ENCODE measurements at regions of chr11 and their contacts with region 1.

Region 1: GRCh38 chr11:88281317-88281712 is 56.2 kb downstream of the CTSC start:
- H3K4me3 Mint-ChIP-seq: no peak overlapping the region
- H3K27ac Mint-ChIP-seq: no peak overlapping the region
- H3K4me1 Mint-ChIP-seq: peaks cover 16% of the 10 kb centered on the region
- H3K27me3 Mint-ChIP-seq: no peaks in the 10 kb centered on the region

Region 2: DNA sequence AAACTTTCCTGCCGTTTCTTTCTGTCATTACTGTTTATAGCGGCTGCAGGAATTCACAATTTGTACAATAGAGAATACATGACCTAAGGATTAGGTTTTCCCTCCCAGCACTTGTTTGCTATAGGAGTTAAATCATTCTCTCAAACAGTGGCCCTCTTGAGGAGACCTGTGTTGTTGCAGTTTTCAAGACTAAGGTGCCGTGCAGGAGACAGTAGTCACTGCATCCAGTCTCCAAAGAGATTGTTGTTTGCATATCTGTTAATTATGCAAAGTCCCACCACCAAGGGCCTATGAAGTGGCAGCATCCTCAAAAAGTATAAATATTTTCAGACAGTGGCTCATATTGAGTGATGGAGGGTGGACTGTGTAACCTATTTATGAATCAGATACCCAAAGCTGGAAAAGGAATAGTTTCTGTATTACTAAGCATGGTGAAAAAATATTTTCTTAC is 1478.7 kb before region 1 on chr11:
- intact Hi-C with region 1: loop called (anchors 10 kb)
- H3K4me3 Mint-ChIP-seq: no peak overlapping the region
- H3K27ac Mint-ChIP-seq: no peak overlapping the region
- H3K4me1 Mint-ChIP-seq: peaks cover 38% of the 10 kb centered on the region
- H3K27me3 Mint-ChIP-seq: peaks cover 48% of the 10 kb centered on the region

Region 3: GRCh38 chr11:88103337-88104206 is 177.7 kb before region 1 on chr11:
- intact Hi-C with region 1: no loop called
- H3K4me3 Mint-ChIP-seq: no peak overlapping the region
- H3K27ac Mint-ChIP-seq: no peak overlapping the region
- H3K4me1 Mint-ChIP-seq: peaks cover 10% of the 10 kb centered on the region
- H3K27me3 Mint-ChIP-seq: no peaks in the 10 kb centered on the region

Region 4: DNA sequence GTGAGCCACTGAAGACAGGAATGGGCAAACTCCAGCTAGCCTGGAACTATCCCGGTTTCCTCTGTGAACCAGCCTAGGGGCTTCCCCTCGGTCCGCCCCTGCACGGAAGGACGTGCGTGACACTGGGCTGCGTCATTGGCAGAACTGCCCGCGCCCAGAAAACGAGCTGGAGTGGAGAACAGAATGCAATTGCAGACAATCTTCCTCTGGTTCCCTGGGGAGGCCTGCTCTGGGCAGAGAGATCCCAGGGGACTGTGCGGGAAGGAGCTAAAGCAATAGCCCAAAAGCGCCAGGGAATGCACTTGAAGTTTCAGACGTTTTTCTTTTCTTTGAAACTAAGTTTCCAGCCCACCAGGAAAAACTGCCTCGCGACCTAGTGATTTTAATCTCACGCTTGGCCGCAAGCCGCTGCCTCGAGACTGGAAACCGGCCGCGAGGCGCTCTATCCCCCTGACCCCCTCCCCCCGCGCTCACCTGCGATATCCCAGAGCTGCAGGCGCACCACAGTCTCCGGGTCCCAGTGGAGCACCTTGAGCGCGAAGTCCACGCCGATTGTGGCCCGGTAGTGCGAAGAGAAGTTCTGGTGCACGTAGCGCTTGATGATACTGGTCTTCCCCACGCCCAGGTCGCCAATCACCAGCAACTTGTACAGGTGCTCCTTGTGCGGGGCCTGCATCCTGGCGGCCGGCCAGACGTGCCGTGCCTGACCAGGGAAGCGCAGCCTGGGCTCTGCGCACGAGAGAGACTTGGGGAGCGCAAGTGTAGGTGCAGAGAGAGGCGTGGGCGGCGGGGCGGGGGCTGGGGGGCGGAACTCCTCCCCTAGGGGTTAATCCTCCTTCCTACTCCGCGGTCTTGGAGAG is 106.4 kb before region 1 on chr11 and contains the start of gene RAB38:
- intact Hi-C with region 1: no loop called
- H3K4me3 Mint-ChIP-seq: peak within 1 kb of the TSS; percentile 72
- H3K27ac Mint-ChIP-seq: peak within 1 kb of the TSS; percentile 27
- H3K4me1 Mint-ChIP-seq: peaks cover 13% of the 10 kb centered on the region
- H3K27me3 Mint-ChIP-seq: peaks cover 5% of the 10 kb centered on the region

Region 5: GRCh38 chr11:88979641-88980040 is 698.3 kb after region 1 on chr11:
- intact Hi-C with region 1: no loop called
- H3K4me3 Mint-ChIP-seq: no peak overlapping the region
- H3K27ac Mint-ChIP-seq: no peak overlapping the region
- H3K4me1 Mint-ChIP-seq: no peaks in the 10 kb centered on the region
- H3K27me3 Mint-ChIP-seq: no peaks in the 10 kb centered on the region

Region 6: DNA sequence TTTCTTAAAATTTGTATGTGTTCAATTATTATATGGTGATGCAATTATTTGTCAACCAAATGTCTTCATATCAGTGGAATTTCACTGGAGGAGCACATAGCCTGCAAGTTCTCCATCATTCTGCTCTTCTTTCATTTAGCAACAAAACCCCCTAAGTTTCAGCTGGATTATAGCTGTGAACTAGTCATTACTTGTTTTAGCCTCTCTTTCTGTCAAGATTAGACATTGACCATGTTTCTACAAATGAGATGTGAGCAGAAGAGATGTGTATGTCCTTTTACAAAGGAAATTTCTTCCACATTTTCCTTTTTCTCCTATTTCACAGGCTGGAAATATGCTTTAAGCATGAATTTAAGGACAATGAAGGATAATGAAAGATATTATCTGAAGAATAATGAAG is 1219.0 kb after region 1 on chr11:
- intact Hi-C with region 1: no loop called
- H3K4me3 Mint-ChIP-seq: no peak overlapping the region
- H3K27ac Mint-ChIP-seq: no peak overlapping the region
- H3K4me1 Mint-ChIP-seq: no peaks in the 10 kb centered on the region
- H3K27me3 Mint-ChIP-seq: no peaks in the 10 kb centered on the region

Measured in dendritic cell treated with granulocyte-macrophage colony-stimulating factor and Interleukin-4, amounts not matched to agents 40 ng/mL and 50 ng/mL, for 4 days (primary cell).